Activated CD4-positive, alpha-beta T cell treated with anti-CD3 and anti-CD28 coated beads for 36 hours (primary cell): ENCODE measurements at regions of chr17 and their contacts with region 1.

Region 1: DNA sequence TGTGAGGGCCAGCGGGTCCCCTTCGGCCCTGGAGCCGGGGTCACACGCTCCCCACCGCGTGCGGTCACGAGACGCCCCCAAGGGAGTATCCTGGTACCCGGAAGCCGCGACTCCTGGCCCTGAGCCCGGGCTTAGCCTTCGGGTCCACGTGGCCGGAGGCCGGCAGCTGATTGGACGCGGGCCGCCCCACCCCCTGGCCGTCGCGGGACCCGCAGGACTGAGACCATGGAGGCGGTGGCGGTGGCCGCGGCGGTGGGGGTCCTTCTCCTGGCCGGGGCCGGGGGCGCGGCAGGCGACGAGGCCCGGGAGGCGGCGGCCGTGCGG is at the start of gene NAGLU:
- DNase-seq: peak; percentile 92
- ATAC-seq: peak; percentile 87
- H3K4me3 Mint-ChIP-seq: peak within 1 kb of the TSS; percentile 86
- H3K27ac Mint-ChIP-seq: peak within 1 kb of the TSS; percentile 90
- H3K4me1 Mint-ChIP-seq: peaks cover 30% of the 10 kb centered on the region
- H3K27me3 Mint-ChIP-seq: no peaks in the 10 kb centered on the region
- total RNA-seq, gene NAGLU: 9.7 to 12.5 TPM

Region 2: GRCh38 chr17:42554250-42555121 is 18.5 kb after region 1 on chr17:
- CTCF ChIA-PET with region 1: interaction called, 8 read pairs
- POLR2A ChIA-PET with region 1: no interaction called
- intact Hi-C with region 1: loop called (anchors 1 kb)
- DNase-seq: peak; percentile 85
- ATAC-seq: peak; percentile 85
- H3K4me3 Mint-ChIP-seq: peak overlapping the region; percentile 85
- H3K27ac Mint-ChIP-seq: peak overlapping the region; percentile 92
- H3K4me1 Mint-ChIP-seq: peaks cover 22% of the 10 kb centered on the region
- H3K27me3 Mint-ChIP-seq: no peaks in the 10 kb centered on the region

Region 3: DNA sequence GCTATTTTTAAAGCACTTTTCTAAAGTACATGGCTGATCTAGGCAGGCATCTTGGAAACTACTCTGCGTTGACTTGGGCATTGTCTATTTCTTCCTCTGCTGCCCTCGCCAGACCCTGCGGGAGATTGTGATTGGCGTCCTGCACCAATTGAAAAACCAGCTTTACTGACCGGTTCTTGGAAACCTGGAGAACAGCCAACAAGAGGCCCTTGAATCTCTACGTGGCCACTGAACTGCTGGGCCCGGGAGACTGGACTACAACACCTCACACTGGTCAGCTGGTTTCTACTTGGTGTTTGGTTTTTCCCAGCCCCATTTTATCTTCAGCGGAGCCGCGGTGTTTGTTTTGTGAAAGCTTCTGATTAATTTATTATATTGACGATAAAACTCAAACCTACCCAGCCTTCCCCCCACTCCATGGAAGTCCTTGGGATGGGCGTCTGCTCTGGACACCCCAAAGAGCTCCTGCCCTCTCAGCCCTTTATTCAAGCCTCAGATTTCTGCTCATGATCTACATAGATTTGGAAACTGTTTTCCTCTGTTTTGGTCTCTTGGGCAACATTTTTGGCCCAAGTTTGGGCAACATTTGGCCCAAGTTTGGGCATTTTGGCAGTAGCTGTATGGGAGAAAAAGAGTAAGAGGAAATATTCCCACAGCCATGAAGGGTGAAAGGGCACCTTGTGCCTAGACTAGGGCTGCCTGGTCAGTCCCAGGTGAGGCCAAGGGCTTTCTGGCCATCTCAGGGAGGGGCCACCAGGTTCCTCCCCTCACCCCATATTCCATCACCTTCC is 35.6 kb after region 1 on chr17:
- CTCF ChIA-PET with region 1: no interaction called
- POLR2A ChIA-PET with region 1: no interaction called
- intact Hi-C with region 1: no loop called
- DNase-seq: no peak
- ATAC-seq: no peak
- H3K4me3 Mint-ChIP-seq: no peak overlapping the region
- H3K27ac Mint-ChIP-seq: no peak overlapping the region
- H3K4me1 Mint-ChIP-seq: peaks cover 33% of the 10 kb centered on the region
- H3K27me3 Mint-ChIP-seq: no peaks in the 10 kb centered on the region